ENCODE measurements at regions of chr10 and their contacts with region 1.

Region 1: GRCh38 chr10:100391163-100392002 is 44.4 kb downstream of the SCD start:
- DNase-seq: no peak
- H3K4me3 ChIP-seq: no peak overlapping the region
- H3K27ac ChIP-seq: no peak overlapping the region
- H3K4me1 ChIP-seq: no peaks in the 10 kb centered on the region
- H3K27me3 ChIP-seq: no peaks in the 10 kb centered on the region
- CTCF ChIP-seq: no peak

Region 2: GRCh38 chr10:100364735-100365391 is 26.5 kb before region 1 on chr10:
- CTCF ChIA-PET with region 1: no interaction called
- dilution Hi-C with region 1: loop called (anchors 5 kb)
- in situ Hi-C with region 1: no loop called
- intact Hi-C with region 1: no loop called
- DNase-seq: peak; percentile 90
- H3K4me3 ChIP-seq: no peak overlapping the region
- H3K27ac ChIP-seq: peak overlapping the region; percentile 76
- H3K4me1 ChIP-seq: peaks cover 38% of the 10 kb centered on the region
- H3K27me3 ChIP-seq: no peaks in the 10 kb centered on the region
- CTCF ChIP-seq: no peak

Region 3: GRCh38 chr10:100403734-100404133 is 12.4 kb after region 1 on chr10:
- CTCF ChIA-PET with region 1: no interaction called
- dilution Hi-C with region 1: no loop called
- in situ Hi-C with region 1: no loop called
- intact Hi-C with region 1: loop called (anchors 1 kb)
- DNase-seq: no peak
- H3K4me3 ChIP-seq: no peak overlapping the region
- H3K27ac ChIP-seq: no peak overlapping the region
- H3K4me1 ChIP-seq: no peaks in the 10 kb centered on the region
- H3K27me3 ChIP-seq: no peaks in the 10 kb centered on the region
- CTCF ChIP-seq: no peak

Region 4: DNA sequence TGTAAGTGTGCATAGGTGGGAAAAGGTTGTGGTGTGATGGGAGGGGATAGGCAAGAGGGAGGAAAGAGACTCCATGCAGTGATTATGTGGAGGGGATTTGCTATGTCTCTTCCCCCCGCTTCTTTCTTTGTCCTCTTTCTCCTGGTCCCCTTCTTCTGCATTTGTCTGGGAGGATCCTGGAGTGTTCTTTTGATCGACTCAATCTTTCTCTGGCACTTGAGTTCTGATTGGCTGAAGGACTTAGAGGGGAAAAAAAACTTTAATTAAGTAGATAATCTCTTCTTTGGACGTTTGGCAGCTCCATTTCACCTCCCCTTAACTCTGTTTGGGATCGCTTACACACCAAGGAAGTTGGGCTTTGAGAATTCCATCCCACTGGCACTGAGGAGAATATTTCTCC is 71.3 kb after region 1 on chr10 and contains the start of gene WNT8B:
- CTCF ChIA-PET with region 1: no interaction called
- dilution Hi-C with region 1: no loop called
- in situ Hi-C with region 1: no loop called
- intact Hi-C with region 1: no loop called
- DNase-seq: no peak
- H3K4me3 ChIP-seq: no peak within 1 kb of the TSS
- H3K27ac ChIP-seq: no peak within 1 kb of the TSS
- H3K4me1 ChIP-seq: no peaks in the 10 kb centered on the region
- H3K27me3 ChIP-seq: peaks cover 5% of the 10 kb centered on the region
- CTCF ChIP-seq: no peak
- total RNA-seq, gene WNT8B: not detected